GM10248 (cell line): ENCODE measurements at regions of chr3 and their contacts with region 1.

Region 1: GRCh38 chr3:38521391-38521987 is 25.3 kb downstream of the EXOG start:
- DNase-seq: peak; percentile 72
- CTCF ChIP-seq: peak; percentile 95

Region 2: DNA sequence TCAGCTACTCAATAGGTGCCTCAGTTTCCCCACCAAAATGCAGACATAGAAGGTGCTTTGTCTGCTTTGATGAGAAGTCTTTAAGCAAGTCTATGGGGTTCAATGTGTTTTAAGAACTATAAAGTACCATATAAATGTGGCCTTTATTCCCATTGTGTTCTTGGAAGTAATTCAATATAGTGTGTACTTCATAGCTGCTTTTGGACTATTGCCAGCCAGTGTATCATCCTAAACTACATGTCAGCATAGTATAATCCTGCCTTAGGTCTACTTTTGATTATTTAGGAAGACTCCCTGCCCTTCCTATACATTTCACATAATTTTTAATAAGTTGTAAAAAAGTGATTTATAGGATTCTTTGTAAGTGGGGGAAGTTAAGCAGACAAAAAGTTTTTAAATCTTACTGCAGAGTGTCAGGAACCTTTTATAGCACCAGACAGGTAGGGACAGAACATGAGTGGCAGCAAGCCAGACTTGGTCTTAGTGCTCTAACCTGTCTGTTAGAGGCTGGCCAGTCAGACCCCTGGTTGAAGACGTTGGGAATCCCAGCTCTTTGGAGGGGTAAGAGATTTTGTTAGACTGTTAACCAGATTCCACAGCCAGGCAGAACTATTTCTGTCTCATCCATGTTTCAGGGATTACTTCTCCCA is 1479.8 kb before region 1 on chr3:
- CTCF ChIA-PET with region 1: no interaction called
- POLR2A ChIA-PET with region 1: no interaction called
- DNase-seq: no peak
- CTCF ChIP-seq: no peak

Region 3: DNA sequence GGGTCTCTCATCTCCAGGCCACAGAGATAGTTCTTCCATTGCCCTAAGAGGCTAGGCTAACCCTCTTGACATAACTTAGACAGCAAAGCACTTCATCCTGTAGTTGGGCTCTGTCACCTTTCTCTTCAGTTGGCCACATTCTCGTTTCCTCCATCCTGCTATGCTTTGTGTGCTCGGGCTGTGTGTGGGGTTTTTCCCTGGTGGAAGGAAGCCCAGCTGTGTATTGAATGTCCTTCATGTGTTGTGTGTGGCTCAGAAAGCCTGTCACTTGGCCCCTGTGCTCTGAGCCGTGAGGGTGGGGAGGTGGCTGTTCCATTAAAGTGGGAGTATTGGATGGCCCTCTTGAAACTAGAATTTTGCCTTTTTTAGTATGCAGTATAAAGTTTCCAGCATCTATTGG is 34.2 kb before region 1 on chr3:
- CTCF ChIA-PET with region 1: interaction called, 22 read pairs
- POLR2A ChIA-PET with region 1: no interaction called
- DNase-seq: peak; percentile 71
- CTCF ChIP-seq: no peak

Region 4: DNA sequence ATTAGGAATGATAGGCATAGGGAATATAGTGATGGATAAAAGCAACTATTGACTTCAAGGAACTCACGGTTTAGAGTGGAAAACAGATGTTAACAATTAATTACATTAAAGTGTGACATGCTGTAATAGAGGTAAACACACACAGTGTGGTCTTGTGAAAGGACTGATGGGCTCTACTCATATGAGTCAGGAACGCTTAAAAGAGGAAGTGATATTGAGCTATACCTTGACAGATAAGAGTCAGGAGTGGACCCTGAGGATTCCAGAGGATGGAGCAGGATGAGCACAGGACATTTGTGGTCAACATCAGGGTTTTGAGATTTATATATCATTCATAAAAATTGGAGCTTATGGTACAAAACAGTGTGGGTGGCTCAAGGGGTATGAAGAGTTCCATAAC is 14.4 kb before region 1 on chr3:
- CTCF ChIA-PET with region 1: interaction called, 106 read pairs
- POLR2A ChIA-PET with region 1: no interaction called
- DNase-seq: peak; percentile 54
- CTCF ChIP-seq: no peak

Region 5: GRCh38 chr3:38556640-38557358 is 35.3 kb after region 1 on chr3:
- CTCF ChIA-PET with region 1: interaction called, 11 read pairs
- POLR2A ChIA-PET with region 1: no interaction called
- DNase-seq: no peak
- CTCF ChIP-seq: no peak

Region 6: DNA sequence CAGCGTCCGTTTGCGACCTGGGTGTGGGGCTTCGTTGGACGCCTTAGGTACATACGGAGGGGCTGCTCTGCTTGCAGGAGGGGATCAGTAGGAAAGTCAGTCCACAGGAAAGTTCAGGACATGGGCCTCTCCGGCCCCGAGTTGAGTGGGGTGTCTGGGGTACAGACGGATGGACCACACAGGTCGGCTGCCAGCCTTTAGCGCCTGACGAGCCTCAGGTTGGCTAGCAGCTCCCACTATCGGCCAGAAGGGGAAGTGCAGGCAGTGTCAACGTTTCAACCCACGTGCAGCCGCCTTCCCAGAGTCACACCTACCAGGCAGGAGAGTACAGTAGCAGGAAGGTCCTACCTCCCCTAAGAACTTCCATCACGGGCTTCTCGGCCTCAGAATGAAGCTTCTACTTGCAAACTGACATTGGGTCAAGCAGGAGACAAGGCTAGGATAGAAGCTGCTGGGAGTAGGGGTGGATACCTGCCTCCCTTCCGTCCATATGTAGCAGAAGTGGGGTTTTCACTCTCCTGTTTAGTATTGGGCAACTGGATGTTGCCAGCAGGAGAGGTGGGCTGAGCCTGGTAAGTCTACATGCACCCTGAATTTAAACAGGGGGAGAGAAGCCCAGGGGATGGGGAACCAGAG is 129.8 kb after region 1 on chr3:
- CTCF ChIA-PET with region 1: interaction called, 67 read pairs
- POLR2A ChIA-PET with region 1: no interaction called
- DNase-seq: peak; percentile 84
- CTCF ChIP-seq: peak; percentile 99

Region 7: GRCh38 chr3:39166134-39166731 is 644.7 kb after region 1 on chr3:
- CTCF ChIA-PET with region 1: no interaction called
- POLR2A ChIA-PET with region 1: no interaction called
- DNase-seq: no peak
- CTCF ChIP-seq: no peak